ENCODE measurements at regions of chr10 and their contacts with region 1.

Region 1: DNA sequence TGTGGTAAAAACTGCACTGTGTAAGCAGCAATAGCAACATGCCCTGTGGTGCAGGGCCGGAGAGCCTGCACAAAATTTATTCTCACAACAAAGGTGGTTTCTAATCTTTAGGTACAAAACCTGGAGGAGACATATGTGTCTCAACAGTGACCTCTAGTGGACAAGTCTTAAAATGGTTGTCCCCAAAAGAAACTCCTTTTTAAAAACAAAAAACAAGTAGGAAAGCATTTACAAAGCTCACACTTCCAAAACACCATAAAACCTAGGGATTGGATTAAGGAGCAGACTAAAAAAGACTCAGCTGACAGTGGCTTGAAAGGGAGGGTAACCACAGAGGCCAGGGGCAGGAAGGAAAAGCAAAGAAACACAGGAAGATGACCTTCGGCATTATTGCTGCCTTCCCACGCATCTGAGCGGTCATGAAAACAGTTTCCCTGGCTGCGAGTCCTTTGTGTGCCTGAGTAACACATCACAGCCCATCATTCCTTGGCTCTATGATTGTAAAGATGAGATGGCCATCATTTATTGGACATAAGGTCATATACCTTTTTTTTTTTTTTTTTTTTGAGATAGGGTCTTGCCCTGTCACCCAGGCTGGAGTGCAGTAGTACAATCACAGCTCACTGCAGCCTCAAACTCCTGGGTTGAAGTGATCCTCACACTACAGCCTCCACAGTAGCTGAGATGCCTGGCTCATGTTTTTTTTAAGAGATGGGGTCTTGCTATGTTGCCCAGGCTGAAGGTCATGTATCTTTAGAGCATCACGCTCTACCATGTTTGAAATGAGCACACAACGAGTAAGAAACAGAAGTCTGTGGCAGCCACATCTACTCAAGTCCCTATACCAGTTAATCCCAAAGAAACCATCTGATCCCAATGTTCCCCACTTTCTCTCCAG is 39.5 kb downstream of the RSU1 start:
- DNase-seq: no peak

Region 2: DNA sequence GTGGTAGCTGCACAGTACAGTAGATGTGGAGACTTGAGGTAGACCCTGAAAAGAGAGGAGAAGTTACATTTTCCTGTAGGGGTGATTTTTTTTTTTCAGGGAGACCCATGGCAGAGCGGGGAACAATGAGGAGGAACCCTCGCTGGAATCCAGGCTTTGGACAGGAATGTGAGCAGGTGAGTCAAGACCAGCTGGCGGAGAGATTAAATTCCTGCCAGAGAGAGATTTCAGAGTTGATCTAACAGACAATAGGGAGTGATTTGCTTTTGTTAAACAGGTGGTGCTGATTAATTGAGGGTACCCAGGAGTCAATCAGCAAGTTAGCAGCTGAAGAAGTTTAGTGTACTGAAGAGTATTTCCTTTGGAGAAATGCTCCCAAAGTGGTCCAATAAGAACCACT is 875.8 kb before region 1 on chr10:
- intact Hi-C with region 1: loop called (anchors 5 kb)
- DNase-seq: no peak

Region 3: GRCh38 chr10:16699435-16700057 is 78.2 kb before region 1 on chr10:
- intact Hi-C with region 1: no loop called
- DNase-seq: no peak

Region 4: DNA sequence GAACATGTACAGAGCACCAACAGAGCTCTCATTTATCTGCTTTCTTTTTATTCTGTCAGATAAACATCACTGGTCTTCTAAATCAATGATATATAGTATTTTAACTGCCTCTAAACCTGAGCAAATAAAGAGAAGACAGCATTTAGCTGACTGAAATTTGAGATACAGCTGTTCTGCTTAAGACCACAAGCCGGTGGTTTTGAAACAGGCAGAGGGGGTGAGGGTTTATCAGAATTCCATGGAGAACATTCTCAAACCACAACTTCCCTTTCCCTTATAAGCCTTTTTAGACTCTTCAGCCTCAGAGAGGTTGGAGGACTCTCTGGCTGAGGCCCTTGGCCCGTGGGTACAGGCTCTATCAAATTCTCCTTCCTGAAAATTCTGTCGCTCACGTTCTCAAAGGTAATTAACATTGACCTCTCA is 126.9 kb after region 1 on chr10:
- intact Hi-C with region 1: no loop called
- DNase-seq: no peak